Right cardiac atrium (tissue), 5 donors: ENCODE measurements at regions of chr16 and their contacts with region 1.

Region 1: DNA sequence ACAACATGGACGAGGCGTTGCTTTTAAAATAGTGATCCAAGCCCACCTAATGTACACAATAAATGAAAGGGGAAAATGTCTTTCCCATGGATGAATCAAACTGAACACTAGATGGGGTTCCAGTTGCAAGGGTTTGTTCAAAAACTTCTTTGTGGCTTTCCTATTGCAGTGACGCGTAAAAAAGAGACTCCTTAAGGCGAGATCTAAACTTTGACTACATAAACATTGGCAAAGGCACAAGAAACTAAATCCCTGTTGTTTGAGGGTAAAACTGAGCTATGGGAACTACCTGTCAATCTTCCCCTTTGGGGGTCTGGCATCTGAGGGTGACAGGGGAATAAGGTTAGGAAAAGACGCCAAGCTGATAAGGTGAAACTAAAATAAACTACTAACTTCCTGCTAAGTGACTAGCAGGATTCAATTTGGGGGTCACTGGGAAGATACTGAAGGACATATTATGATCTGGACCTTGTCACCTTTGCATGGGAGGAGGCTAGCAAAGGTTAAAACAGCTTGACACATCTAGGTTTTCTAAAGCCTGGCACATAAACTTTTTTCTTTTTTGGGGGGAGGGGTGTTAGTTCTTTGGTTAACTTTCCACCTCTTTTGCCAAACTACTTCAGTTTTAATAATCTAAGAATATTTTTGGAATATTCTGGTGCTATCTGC is 4.7 kb downstream of the SALL1 start:
- DNase-seq: no peak
- ATAC-seq: no peak
- H3K4me3 ChIP-seq: no peak overlapping the region
- H3K27ac ChIP-seq: no peak overlapping the region
- H3K4me1 ChIP-seq: peaks cover 2% of the 10 kb centered on the region
- H3K27me3 ChIP-seq: peaks cover 7% of the 10 kb centered on the region

Region 2: DNA sequence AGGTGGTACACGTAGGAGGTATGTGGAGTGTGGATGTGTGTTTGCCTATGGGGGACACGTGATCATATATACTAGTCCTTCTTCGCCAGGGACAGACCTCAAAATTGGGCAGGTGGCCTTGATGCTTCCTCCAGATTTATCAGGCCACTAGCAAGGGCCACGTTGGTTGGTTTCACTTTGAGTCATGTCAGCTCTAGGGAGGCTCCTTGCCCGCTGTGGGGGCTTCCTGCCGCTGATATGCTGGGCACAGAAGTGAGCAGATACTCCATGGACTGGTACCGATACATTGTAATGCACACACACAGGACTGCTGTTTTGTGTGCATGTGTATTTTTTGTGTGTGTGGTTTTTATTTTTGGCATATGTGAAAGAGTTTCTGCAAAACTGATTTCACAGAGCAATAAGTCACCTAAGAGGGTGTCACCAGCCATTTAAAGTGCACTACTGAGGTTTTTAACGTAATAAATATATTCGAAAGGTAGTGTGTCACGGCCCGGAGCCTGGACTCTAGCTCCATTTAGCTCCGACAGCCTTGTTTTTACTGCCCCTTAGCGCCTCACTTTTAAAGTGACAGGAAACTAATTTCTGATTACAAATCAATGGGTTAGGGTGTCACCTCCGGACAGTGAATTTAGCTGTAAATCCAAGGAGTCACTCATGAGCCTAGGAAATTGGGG is 610.2 kb after region 1 on chr16:
- intact Hi-C with region 1: loop called in 2 of 4 experiments (anchors 5 to 10 kb)
- DNase-seq: no peak
- ATAC-seq: no peak
- H3K4me3 ChIP-seq: no peak overlapping the region
- H3K27ac ChIP-seq: no peak overlapping the region
- H3K4me1 ChIP-seq: no peaks in the 10 kb centered on the region
- H3K27me3 ChIP-seq: no peaks in the 10 kb centered on the region

Region 3: GRCh38 chr16:51762081-51762996 is 615.9 kb after region 1 on chr16:
- intact Hi-C with region 1: loop called in 2 of 4 experiments (anchors 5 to 10 kb)
- DNase-seq: peak; percentile 78 to 92 (median 90)
- ATAC-seq: peak; percentile 91 to 96
- H3K4me3 ChIP-seq: no peak overlapping the region
- H3K27ac ChIP-seq: no peak overlapping the region
- H3K4me1 ChIP-seq: no peaks in the 10 kb centered on the region
- H3K27me3 ChIP-seq: no peaks in the 10 kb centered on the region